ENCODE measurements at regions of chr15 and their contacts with region 1.

Region 1: GRCh38 chr15:74635228-74635627 is 19.6 kb downstream of the CLK3 start:
- DNase-seq: peak; percentile 82
- H3K4me3 Mint-ChIP-seq: no peak overlapping the region
- H3K27ac Mint-ChIP-seq: no peak overlapping the region
- H3K4me1 Mint-ChIP-seq: peaks cover 3% of the 10 kb centered on the region
- H3K27me3 Mint-ChIP-seq: no peaks in the 10 kb centered on the region

Region 2: DNA sequence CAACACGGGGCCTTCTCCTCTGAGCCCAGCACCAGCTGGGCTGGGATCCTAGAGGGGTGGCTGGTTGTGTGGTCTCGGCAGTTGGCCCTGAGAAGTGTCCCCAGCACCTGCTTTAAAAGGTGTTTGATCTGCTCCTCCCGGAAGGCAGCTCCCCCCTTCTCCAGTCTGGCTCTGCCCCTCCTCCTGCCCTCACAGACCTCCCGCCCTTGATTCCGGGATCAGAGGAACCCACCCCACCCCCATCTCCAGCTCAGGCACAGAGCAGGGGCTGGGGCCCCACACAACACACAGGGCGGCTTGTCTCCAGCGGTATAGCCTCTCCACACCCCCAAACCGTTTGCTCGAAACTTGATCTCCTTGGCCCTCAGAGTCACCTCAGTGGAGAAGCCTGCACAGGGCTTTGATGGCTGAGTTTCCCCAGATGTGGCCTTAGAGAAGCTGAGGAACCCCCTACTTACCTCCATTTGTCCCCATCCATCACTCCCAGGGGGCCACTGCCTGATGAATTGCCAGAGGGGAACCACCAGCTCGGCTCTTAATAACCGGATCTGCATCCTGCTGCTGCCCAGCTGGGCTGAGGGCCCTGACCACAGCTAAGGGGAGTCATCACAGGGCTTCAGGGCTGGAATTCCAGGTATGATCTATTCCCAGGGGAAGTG is 426.2 kb before region 1 on chr15:
- CTCF ChIA-PET with region 1: no interaction called
- POLR2A ChIA-PET with region 1: no interaction called
- DNase-seq: no peak
- H3K4me3 Mint-ChIP-seq: no peak overlapping the region
- H3K27ac Mint-ChIP-seq: no peak overlapping the region
- H3K4me1 Mint-ChIP-seq: no peaks in the 10 kb centered on the region
- H3K27me3 Mint-ChIP-seq: peaks cover 18% of the 10 kb centered on the region

Region 3: DNA sequence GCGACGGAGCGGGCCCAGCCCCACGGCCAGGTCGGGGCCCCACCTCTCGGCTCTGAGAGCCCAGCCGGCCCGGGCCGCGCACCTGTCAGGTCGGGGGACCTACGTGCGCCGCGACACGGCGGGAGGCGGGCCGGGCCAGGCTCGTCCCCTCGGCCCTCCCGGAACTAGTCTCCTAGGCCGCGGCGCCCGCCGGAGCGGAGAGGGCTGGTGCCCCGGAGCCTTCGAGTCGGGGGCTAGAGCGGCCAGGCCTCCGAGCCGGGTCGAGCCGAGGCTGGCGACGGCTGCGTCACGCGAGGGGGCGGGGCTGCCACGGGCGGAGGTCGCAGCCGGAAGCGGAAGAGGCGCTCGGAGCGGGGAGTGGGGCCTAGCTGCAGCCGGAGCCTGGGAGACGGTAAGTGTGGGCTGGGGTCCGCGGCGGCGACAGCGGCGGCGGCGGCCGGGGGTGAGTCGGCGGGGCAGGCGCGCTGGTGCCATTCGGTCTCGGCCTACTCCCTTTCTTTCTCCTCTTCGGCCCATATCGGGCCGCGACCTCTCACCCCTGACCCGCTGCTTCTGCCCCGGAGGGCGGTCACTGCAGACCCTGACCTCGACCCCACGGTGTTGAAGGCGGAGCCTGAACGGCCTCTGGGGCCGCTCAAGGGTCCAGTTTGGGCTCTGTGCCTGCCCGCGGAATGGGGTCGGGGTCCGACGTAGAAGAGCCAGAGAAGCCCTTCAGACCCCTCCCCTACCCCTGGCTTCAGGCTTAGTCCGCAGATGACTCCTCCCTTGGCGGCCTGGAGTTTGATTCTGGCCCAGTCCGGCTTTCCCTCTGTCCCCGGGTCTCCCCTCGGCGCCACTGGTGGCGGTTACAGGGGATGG is 19.5 kb before region 1 on chr15 and contains the start of gene CLK3:
- CTCF ChIA-PET with region 1: interaction called, 144 read pairs
- POLR2A ChIA-PET with region 1: no interaction called
- DNase-seq: peak; percentile 95
- H3K4me3 Mint-ChIP-seq: peak within 1 kb of the TSS; percentile 85
- H3K27ac Mint-ChIP-seq: peak within 1 kb of the TSS; percentile 96
- H3K4me1 Mint-ChIP-seq: peaks cover 52% of the 10 kb centered on the region
- H3K27me3 Mint-ChIP-seq: no peaks in the 10 kb centered on the region
- total RNA-seq, gene CLK3: 126 to 134 TPM

Region 4: GRCh38 chr15:74763416-74763815 is 128.2 kb after region 1 on chr15:
- CTCF ChIA-PET with region 1: interaction called, 141 read pairs
- POLR2A ChIA-PET with region 1: no interaction called
- DNase-seq: no peak
- H3K4me3 Mint-ChIP-seq: no peak overlapping the region
- H3K27ac Mint-ChIP-seq: no peak overlapping the region
- H3K4me1 Mint-ChIP-seq: peaks cover 6% of the 10 kb centered on the region
- H3K27me3 Mint-ChIP-seq: no peaks in the 10 kb centered on the region

Region 5: DNA sequence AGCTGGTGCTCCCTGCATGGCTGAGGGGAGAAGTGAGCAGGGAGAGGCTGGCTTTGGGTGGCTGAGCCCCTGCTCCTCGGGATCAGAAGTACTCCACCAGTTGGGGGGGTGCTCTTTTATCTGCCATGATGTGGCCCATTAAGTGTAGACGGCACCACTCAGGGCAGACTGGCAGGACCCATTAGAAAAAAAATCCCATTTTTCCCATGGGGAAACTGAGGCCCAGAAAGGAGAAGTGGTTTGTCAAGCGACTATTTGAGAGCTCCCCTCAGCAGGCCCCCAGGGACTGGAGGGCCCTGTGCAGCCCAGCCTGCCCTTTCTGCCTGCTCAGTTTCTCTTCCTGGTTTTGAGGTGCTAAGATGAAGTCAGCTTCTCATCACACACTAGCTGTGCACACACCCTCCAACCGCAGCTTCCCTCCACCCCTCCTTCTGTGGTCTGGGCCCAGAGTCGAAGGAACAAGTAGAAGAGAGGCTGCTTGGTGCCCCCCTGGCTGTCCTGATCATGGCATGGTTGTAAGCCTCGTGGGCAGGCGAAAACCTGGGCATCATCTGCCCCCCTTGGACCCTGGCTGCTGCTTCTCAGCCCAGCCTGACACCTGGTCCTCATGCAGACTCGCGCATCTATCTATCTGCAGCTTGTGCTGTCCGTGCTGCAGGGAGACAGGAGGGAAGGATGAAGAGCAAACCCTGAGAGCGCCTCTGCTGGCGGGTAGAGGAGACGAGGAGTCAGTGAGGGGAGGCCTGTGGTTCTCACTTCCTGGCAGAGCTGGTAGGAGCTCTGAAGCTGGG is 152.2 kb after region 1 on chr15:
- CTCF ChIA-PET with region 1: interaction called, 10 read pairs
- POLR2A ChIA-PET with region 1: no interaction called
- DNase-seq: peak; percentile 95
- H3K4me3 Mint-ChIP-seq: peak overlapping the region; percentile 88
- H3K27ac Mint-ChIP-seq: peak overlapping the region; percentile 98
- H3K4me1 Mint-ChIP-seq: peaks cover 66% of the 10 kb centered on the region
- H3K27me3 Mint-ChIP-seq: no peaks in the 10 kb centered on the region

Measured in activated CD4-positive, alpha-beta T cell treated with anti-CD3 and anti-CD28 coated beads, Interleukin-2, amount 10 ng/mL, durations not matched to agents 7 days and 5 days (primary cell).